Right ventricle myocardium inferior (tissue), 1 donor: ENCODE measurements at regions of chr1 and their contacts with region 1.

Region 1: DNA sequence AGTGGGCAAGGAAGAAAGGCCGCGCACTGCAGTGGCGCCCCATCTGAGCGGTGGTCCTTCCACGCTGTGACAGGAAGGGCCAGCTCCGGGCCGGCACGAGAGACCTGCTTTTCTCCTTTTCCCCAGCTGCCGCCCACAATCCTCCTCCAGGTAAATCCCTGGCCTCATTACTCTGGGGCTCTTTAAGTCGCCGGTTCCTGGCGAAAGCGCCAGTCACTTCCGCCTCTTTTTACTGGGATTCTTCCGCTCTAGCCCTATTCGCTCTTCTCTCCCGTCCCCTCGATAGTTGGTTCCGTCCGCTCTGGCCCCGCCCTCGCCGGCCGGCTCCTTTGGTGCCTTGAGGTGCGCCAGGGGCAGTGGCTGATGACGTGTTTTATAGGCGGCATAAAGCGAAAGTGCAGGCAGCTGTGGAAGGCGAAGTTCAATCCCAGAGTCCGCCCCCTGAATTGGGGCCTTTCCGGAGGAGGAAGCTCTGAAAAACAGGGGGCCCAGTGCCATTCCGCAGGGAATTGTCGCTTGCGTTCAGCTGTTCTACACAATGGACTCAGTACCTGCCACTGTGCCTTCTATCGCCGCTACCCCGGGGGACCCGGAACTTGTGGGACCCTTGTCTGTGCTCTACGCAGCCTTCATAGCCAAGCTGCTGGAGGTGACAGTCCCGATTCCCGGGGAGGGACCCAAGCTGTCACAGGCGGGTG is 26.2 kb downstream of the MIA3 start:
- DNase-seq: peak; percentile 99
- ATAC-seq: peak; percentile 100

Region 2: GRCh38 chr1:222713091-222713961 is 69.2 kb after region 1 on chr1:
- intact Hi-C with region 1: loop called (anchors 2 kb)
- DNase-seq: peak; percentile 96
- ATAC-seq: peak; percentile 90